ENCODE measurements at regions of chr11 and their contacts with region 1.

Region 1: GRCh38 chr11:71169328-71169727 is 83.0 kb downstream of the SHANK2 start:
- DNase-seq: no peak
- H3K4me3 ChIP-seq: no peak overlapping the region
- H3K27ac ChIP-seq: no peak overlapping the region
- H3K4me1 ChIP-seq: no peaks in the 10 kb centered on the region
- H3K27me3 ChIP-seq: no peaks in the 10 kb centered on the region
- CTCF ChIP-seq: no peak

Region 2: DNA sequence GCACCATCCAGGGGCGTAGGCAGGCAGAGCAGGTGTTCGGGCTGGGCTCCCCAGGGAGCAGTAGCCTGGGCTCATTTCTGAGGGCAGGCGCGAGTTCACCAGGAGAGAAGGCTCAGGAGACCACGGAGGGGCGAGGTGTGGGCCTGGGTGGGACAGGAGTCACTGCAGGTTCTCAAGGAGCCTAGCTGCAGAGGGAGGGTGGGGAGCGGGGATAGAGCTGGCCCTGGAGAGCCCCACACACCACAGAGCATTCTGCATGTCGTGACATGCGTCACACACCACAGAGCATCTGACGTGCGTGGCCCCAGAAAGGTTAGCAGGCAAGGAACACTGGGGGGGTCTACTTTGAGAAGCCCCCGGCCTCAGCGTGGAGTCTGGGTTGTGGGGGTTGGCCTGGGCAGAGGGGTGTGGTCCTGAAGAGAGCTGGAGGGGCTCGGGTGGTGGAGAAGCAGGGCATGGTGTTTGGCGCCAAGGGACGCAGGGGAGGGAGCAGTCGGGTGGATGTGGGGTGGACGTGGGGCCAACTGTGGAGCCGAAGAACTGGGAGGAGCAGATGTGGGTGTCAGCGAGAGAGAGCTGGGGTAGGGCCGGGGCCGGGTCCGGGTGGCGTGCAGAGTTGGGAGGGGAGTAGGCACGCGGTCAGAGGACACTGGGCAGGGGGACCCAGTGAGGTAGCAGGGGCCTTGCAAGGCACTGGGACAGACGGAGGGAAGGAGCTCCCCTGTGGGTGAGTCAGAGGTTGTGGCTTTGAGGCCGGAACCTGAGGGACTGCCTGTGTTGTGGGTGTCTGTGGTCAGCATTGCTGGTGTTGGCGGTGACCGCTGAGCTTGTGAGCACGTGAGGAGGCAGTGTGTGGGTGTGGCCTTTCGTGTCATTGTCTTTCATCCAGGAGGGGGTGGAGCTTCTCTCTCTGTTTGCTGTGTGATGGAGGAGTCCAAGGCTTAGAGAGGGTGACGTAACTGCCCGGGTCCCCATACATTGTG is 745.5 kb before region 1 on chr11:
- CTCF ChIA-PET with region 1: no interaction called
- POLR2A ChIA-PET with region 1: no interaction called
- intact Hi-C with region 1: no loop called
- DNase-seq: peak; percentile 49 to 89
- H3K4me3 ChIP-seq: no peak overlapping the region
- H3K27ac ChIP-seq: no peak overlapping the region
- H3K4me1 ChIP-seq: no peaks in the 10 kb centered on the region
- H3K27me3 ChIP-seq: no peaks in the 10 kb centered on the region
- CTCF ChIP-seq: no peak

Region 3: GRCh38 chr11:71152991-71153390 is 16.3 kb before region 1 on chr11:
- CTCF ChIA-PET with region 1: no interaction called
- POLR2A ChIA-PET with region 1: no interaction called
- intact Hi-C with region 1: no loop called
- DNase-seq: peak; percentile 44 to 74
- H3K4me3 ChIP-seq: peak overlapping the region; percentile 61
- H3K27ac ChIP-seq: peak overlapping the region; percentile 71
- H3K4me1 ChIP-seq: peaks cover 23% of the 10 kb centered on the region
- H3K27me3 ChIP-seq: no peaks in the 10 kb centered on the region
- CTCF ChIP-seq: no peak

Region 4: GRCh38 chr11:71184421-71185210 is 15.3 kb after region 1 on chr11:
- CTCF ChIA-PET with region 1: interaction called, 10 read pairs
- POLR2A ChIA-PET with region 1: no interaction called
- intact Hi-C with region 1: no loop called
- DNase-seq: no peak
- H3K4me3 ChIP-seq: no peak overlapping the region
- H3K27ac ChIP-seq: no peak overlapping the region
- H3K4me1 ChIP-seq: no peaks in the 10 kb centered on the region
- H3K27me3 ChIP-seq: no peaks in the 10 kb centered on the region
- CTCF ChIP-seq: no peak

Region 5: DNA sequence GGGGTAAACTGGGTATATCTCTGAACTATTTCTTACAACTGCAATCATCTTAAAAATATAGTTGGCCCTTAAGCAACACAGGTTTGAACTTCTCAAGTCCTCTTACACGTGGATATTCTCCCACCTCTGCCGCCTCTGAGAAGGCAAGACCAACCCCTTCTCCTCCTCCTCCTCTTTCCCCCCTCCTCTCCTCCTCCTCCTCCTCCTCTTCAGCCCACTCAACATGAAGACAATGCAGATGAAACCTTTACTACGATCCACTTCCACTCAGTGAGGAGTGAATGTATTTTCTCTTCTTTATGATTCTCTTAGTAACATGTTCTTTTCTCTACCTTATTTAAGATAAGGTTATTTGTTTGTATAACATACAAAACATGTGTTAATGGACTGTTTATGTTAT is 63.0 kb after region 1 on chr11:
- CTCF ChIA-PET with region 1: no interaction called
- POLR2A ChIA-PET with region 1: no interaction called
- intact Hi-C with region 1: no loop called
- DNase-seq: no peak
- H3K4me3 ChIP-seq: no peak overlapping the region
- H3K27ac ChIP-seq: no peak overlapping the region
- H3K4me1 ChIP-seq: no peaks in the 10 kb centered on the region
- H3K27me3 ChIP-seq: no peaks in the 10 kb centered on the region
- CTCF ChIP-seq: no peak

Measured in PC-9 (cell line).